ENCODE measurements at regions of chr1 and their contacts with region 1.

Region 1: DNA sequence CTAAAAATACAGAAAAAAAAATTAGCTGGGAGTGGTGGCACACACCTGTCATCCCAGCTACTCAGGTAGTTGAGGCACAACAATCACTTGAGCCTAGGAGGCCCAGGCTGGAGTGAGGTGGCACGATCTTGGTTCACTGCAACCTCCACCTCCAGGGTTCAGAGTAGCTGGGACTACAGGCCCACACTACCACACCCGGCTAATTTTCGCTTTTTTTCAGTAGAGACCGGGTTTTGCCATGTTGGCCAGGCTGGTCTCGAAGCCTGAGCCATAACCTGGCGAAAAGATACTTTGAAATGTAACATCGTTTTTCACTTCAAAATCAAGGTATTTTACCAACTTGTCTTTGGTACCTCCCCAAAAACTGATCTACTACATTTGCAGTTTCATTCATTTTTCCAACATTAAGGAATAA is 6.1 kb downstream of the GAS5 start:
- DNase-seq: peak in 1 of 2 experiments; percentile 56
- H3K4me3 ChIP-seq: no peak overlapping the region
- H3K27ac ChIP-seq: peak overlapping the region; percentile 31
- H3K4me1 ChIP-seq: peaks cover 25% of the 10 kb centered on the region
- H3K27me3 ChIP-seq: no peaks in the 10 kb centered on the region
- CTCF ChIP-seq: no peak

Region 2: DNA sequence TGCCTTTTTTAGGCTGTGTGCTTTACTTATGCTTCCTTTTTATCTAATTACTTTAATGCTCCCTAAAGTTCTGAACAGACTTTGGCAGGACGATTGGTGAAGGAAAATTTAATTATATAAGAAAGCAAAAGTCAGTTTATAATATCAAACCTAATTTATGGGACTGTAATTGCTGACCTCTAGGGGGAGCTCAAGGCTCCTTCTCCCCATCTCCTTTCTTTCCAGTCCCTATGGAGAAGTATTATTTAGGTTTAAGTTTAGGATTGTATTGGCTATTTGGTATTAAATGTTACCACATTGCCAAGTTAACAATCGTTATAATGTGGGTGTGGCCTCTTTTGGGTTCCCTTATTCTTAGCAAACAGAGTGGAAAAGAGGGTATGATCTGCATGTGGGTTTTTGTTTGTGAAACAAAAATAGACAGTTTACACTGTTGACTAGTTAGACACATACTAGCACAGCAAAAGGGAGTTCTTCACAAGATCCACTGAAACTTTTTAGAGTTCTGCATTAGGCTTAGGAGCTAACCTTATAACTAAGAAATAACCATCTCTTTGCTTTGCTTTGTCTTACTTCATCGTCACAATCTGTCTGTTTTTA is 606.4 kb before region 1 on chr1:
- CTCF ChIA-PET with region 1: no interaction called
- POLR2A ChIA-PET with region 1: no interaction called
- intact Hi-C with region 1: no loop called
- DNase-seq: peak in 1 of 2 experiments; percentile 11
- H3K4me3 ChIP-seq: no peak overlapping the region
- H3K27ac ChIP-seq: no peak overlapping the region
- H3K4me1 ChIP-seq: no peaks in the 10 kb centered on the region
- H3K27me3 ChIP-seq: no peaks in the 10 kb centered on the region
- CTCF ChIP-seq: peak; percentile 86

Region 3: GRCh38 chr1:173832748-173833147 is 29.0 kb before region 1 on chr1:
- CTCF ChIA-PET with region 1: no interaction called
- POLR2A ChIA-PET with region 1: interaction called, 18 read pairs
- intact Hi-C with region 1: no loop called
- DNase-seq: no peak
- H3K4me3 ChIP-seq: no peak overlapping the region
- H3K27ac ChIP-seq: no peak overlapping the region
- H3K4me1 ChIP-seq: no peaks in the 10 kb centered on the region
- H3K27me3 ChIP-seq: no peaks in the 10 kb centered on the region
- CTCF ChIP-seq: no peak